ENCODE measurements at regions of chrX and their contacts with region 1.

Region 1: GRCh38 chrX:57929373-57929772 is 19.1 kb upstream of the ZXDA start:
- DNase-seq: no peak
- ATAC-seq: peak in 2 of 4 donors; percentile 49 to 59
- H3K4me3 ChIP-seq: no peak overlapping the region
- H3K27ac ChIP-seq: no peak overlapping the region
- H3K4me1 ChIP-seq: no peaks in the 10 kb centered on the region
- H3K27me3 ChIP-seq: peaks cover 0 to 2% (median 0%) of the 10 kb centered on the region in 9 donors
- CTCF ChIP-seq: peak in 11 of 12 donors; percentile 28 to 63 (median 46)
- POLR2A ChIP-seq: no peak

Region 2: GRCh38 chrX:57587607-57588006 is 341.8 kb before region 1 on chrX:
- intact Hi-C with region 1: loop called in 1 of 10 experiments (anchors 10 kb)
- DNase-seq: no peak
- ATAC-seq: no peak
- H3K4me3 ChIP-seq: no peak overlapping the region
- H3K27ac ChIP-seq: no peak overlapping the region
- H3K4me1 ChIP-seq: peaks cover 0 to 10% (median 2%) of the 10 kb centered on the region in 12 donors
- H3K27me3 ChIP-seq: no peaks in the 10 kb centered on the region
- CTCF ChIP-seq: no peak
- POLR2A ChIP-seq: no peak

Region 3: DNA sequence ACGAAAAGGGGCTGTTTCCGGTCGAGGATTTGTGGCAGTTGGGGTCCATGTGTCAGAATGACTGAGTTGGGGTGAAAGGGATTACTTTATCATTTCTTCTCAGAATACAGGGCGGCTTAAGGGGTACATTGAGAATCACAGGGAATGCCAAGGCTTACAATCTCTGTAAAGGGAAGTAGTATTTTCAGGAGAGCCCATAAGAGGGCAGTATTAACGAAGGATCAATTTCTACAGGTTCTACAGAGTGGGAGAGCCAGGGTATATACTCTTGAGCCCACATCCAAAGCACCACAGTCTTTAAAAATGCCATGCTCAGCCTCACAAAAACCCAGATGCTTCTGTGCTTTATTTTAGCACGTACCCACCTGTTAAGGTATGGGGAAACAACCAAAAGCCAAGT is 48.6 kb after region 1 on chrX:
- intact Hi-C with region 1: no loop called
- DNase-seq: no peak
- ATAC-seq: no peak
- H3K4me3 ChIP-seq: no peak overlapping the region
- H3K27ac ChIP-seq: no peak overlapping the region
- H3K4me1 ChIP-seq: no peaks in the 10 kb centered on the region
- H3K27me3 ChIP-seq: peaks cover 0 to 9% (median 0%) of the 10 kb centered on the region in 9 donors
- CTCF ChIP-seq: peak in 5 of 12 donors; percentile 7 to 25 (median 20)
- POLR2A ChIP-seq: no peak